ENCODE measurements at regions of chr9 and their contacts with region 1.

Region 1: DNA sequence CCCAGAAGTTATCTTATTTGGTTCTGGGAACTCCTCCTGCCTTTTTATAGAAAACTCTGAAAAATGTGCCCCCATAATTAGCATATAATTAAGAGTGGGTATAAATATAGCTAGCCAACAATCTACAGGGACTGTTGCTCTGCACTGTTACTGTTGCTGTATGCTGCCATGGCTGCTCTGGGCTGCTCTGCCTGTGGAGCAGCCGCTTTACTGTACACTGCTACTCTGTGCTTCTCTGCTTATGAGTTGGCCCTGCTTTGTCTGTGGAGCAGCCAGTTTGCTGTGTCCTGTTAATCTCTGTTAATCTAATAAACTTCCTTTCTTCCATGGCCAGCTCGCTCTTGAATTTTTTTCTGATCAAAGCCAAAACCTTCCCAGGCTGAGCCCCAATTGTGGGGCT is 2244.0 kb upstream of the ACO1 start:
- DNase-seq: no peak
- H3K4me3 Mint-ChIP-seq: no peak overlapping the region
- H3K27ac Mint-ChIP-seq: no peak overlapping the region
- H3K4me1 Mint-ChIP-seq: no peaks in the 10 kb centered on the region
- H3K27me3 Mint-ChIP-seq: no peaks in the 10 kb centered on the region
- CTCF ChIP-seq: no peak

Region 2: GRCh38 chr9:30125881-30126280 is 14.5 kb before region 1 on chr9:
- CTCF ChIA-PET with region 1: no interaction called
- intact Hi-C with region 1: loop called (anchors 2 kb)
- DNase-seq: no peak
- H3K4me3 Mint-ChIP-seq: no peak overlapping the region
- H3K27ac Mint-ChIP-seq: no peak overlapping the region
- H3K4me1 Mint-ChIP-seq: no peaks in the 10 kb centered on the region
- H3K27me3 Mint-ChIP-seq: no peaks in the 10 kb centered on the region
- CTCF ChIP-seq: no peak

Measured in Calu3 (cell line).